ENCODE measurements at regions of chr22 and their contacts with region 1.

Region 1: GRCh38 chr22:37199103-37199759 is 11.2 kb upstream of the C1QTNF6 start:
- DNase-seq: peak; percentile 95 to 100
- H3K4me3 ChIP-seq: peak overlapping the region; percentile 77
- H3K27ac ChIP-seq: peak overlapping the region; percentile 94
- H3K4me1 ChIP-seq: peaks cover 46% of the 10 kb centered on the region
- H3K27me3 ChIP-seq: no peaks in the 10 kb centered on the region
- CTCF ChIP-seq: peak; percentile 91

Region 2: GRCh38 chr22:36331306-36331911 is 867.8 kb before region 1 on chr22:
- CTCF ChIA-PET with region 1: no interaction called
- POLR2A ChIA-PET with region 1: no interaction called
- intact Hi-C with region 1: loop called (anchors 5 kb)
- DNase-seq: peak; percentile 96 to 100
- H3K4me3 ChIP-seq: peak overlapping the region; percentile 42; the same call in 1 of the 2 replicates
- H3K27ac ChIP-seq: peak overlapping the region; percentile 96
- H3K4me1 ChIP-seq: peaks cover 83% of the 10 kb centered on the region
- H3K27me3 ChIP-seq: no peaks in the 10 kb centered on the region
- CTCF ChIP-seq: no peak

Region 3: DNA sequence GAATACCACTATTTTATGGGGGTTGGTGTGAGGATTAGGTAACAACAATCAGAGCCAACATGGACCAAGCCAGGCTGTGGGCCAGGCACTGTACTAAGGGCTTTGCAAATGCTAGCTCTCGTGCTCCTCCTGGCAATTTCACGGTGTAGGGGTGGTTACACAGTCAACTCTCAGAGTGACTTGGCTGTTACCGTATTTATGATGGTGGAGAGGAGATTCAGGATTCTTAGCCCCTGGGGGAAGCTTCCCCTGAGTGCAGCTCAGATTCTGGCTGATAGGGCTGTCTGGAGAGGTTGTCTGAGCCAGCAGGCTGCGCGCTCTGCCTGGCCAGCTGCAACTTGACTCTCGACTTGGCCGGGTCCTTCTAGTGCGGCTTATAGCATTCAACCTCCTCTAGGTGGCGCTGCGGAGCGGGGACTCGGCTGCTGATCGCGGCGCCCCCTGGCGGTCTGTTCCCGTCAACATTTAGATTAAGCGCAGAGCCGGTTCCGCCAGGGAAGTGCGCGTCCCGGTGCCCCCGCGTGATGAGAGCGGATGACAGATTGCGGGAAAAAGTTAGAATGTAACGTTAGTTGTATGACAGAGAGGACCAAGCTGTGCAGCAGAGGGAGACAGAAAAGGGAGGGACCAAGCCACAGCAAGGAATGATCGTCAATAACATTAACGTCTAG is 343.0 kb before region 1 on chr22:
- CTCF ChIA-PET with region 1: no interaction called
- POLR2A ChIA-PET with region 1: no interaction called
- intact Hi-C with region 1: loop called (anchors 5 kb)
- DNase-seq: peak; percentile 68 to 94
- H3K4me3 ChIP-seq: peak overlapping the region; percentile 13; the same call in 1 of the 2 replicates
- H3K27ac ChIP-seq: no peak overlapping the region
- H3K4me1 ChIP-seq: peaks cover 7% of the 10 kb centered on the region
- H3K27me3 ChIP-seq: no peaks in the 10 kb centered on the region
- CTCF ChIP-seq: peak; percentile 100

Region 4: GRCh38 chr22:37043828-37044538 is 155.2 kb before region 1 on chr22:
- CTCF ChIA-PET with region 1: no interaction called
- POLR2A ChIA-PET with region 1: no interaction called
- intact Hi-C with region 1: loop called (anchors 5 kb)
- DNase-seq: peak; percentile 74 to 80
- H3K4me3 ChIP-seq: no peak overlapping the region
- H3K27ac ChIP-seq: no peak overlapping the region
- H3K4me1 ChIP-seq: peaks cover 38% of the 10 kb centered on the region
- H3K27me3 ChIP-seq: no peaks in the 10 kb centered on the region
- CTCF ChIP-seq: peak; percentile 93

Region 5: DNA sequence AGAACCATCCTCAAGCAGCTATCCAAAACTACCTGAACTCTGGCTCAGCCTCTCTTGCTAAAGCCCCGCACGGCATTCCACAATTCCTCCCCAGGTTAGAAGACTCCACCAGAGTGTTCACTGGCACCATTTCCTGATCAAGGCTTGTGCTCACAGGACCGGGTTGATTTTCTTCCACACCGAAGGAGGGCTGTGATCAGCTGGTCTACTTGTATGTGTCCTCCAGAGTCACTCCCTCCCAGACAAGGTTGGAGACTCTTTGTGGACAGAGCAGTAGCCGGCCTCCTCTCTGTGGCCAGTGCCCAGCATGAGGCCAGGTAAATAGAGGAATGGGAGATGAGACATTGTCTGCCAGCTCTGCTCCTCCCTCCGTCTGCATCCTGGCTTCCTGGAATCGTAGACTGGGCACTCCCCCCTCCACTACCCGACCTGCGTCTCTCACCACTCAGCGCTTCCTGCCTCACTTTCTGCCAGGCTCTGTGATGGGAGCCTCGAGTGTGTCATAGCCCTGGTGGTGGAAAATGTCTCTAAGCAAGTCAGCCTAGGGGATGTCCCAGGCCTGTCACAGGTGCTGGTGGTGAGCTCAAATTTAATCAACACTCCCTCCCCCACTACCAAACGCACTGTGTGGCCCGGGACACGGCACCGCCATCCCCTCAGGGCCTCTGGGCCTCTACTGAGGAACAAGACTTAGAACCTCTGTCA is 77.2 kb before region 1 on chr22:
- CTCF ChIA-PET with region 1: interaction called, 5 read pairs
- POLR2A ChIA-PET with region 1: no interaction called
- intact Hi-C with region 1: loop called (anchors 2 kb)
- DNase-seq: peak; percentile 69 to 72
- H3K4me3 ChIP-seq: 0 out of 2 replicates have a peak overlapping the region, but pooled peaks have one; percentile 9
- H3K27ac ChIP-seq: 0 out of 2 replicates have a peak overlapping the region, but pooled peaks have one; percentile 1
- H3K4me1 ChIP-seq: peaks cover 20% of the 10 kb centered on the region
- H3K27me3 ChIP-seq: no peaks in the 10 kb centered on the region
- CTCF ChIP-seq: no peak; the same call in 1 of the 2 replicates

Region 6: DNA sequence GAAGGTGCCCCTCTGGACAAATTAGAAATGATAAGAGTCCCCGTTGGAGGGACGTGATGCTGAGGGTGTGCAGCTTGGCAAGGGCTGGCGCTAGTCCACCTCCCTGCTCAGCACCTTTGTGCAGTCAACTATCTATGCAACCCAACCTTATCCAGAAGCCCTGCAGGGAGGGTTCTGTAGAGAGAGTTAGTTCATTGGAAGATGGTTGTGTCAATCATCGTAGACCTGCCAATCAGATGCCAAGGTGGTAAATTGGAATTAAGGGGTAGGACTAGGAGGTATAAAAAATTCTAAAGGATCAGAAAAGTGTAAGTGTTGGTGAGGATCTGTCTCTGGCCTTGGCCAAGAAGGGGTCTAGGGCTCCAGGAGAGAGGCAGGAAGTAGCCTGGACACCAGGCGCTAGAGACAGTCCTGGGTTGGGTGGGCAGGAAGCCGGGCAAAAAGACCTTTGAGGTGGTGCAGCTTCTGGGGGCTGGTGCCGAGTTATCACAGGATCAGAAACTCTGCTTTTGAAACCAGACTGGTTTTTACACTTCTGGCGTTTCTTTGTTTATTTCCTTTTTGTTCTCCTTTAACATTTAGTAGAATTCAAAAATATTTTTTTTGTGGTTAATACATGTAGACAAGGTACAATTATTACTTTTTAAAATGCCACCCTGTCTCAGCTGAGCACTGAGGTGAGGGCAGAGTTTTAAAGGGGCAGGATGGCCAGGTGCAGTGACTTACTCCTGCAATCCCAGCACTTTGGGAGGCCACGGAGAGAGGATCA is 12.8 kb before region 1 on chr22:
- CTCF ChIA-PET with region 1: interaction called, 5 read pairs
- POLR2A ChIA-PET with region 1: interaction called, 6 read pairs
- intact Hi-C with region 1: loop called (anchors 1 kb)
- DNase-seq: peak; percentile 71 to 80
- H3K4me3 ChIP-seq: peak overlapping the region; percentile 65
- H3K27ac ChIP-seq: peak overlapping the region; percentile 94
- H3K4me1 ChIP-seq: peaks cover 52% of the 10 kb centered on the region
- H3K27me3 ChIP-seq: no peaks in the 10 kb centered on the region
- CTCF ChIP-seq: no peak

Region 7: GRCh38 chr22:37457093-37457893 is 258.1 kb after region 1 on chr22:
- CTCF ChIA-PET with region 1: no interaction called
- POLR2A ChIA-PET with region 1: no interaction called
- intact Hi-C with region 1: loop called (anchors 10 kb)
- DNase-seq: peak; percentile 61 to 92
- H3K4me3 ChIP-seq: no peak overlapping the region
- H3K27ac ChIP-seq: no peak overlapping the region
- H3K4me1 ChIP-seq: peaks cover 27% of the 10 kb centered on the region
- H3K27me3 ChIP-seq: no peaks in the 10 kb centered on the region
- CTCF ChIP-seq: peak; percentile 100

Measured in PC-9 (cell line).